Left ventricle myocardium inferior (tissue), 1 donor: ENCODE measurements at regions of chr6 and their contacts with region 1.

Region 1: DNA sequence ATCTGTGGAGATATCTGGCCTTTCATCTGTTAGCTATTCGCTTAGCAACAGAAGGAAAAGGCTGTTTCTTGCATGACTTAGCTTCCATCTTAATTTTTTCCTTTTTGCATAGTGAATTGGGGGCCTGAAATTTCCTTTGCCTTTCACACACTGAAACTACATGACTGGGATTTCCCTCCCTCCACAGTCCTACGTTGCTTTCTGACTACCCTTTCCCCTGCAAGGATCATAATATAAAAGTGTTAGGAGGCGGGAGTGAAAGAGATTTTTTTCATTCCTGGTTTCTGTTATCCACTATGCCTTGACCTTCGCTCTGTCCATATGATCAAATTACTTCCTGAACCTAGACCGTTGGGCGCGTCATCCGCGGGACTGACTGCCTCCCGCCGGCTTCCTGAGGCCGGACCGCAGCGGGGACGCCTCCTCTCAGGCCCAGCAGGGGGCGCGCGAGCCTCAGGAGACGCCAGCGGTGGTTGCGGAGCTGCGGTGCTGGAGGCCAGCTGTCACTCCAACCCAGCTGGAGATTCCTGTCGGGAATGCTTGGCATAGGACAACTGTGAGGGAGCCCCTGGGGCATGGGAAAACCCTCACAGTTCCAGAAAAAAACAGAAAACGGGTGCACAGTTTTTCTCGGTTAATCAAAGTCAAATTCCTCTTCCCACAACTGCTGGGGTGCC is 55.6 kb downstream of the MEP1A start:
- DNase-seq: peak; percentile 88
- H3K4me3 ChIP-seq: peak overlapping the region; percentile 27
- H3K27ac ChIP-seq: peak overlapping the region; percentile 70
- H3K4me1 ChIP-seq: peaks cover 48% of the 10 kb centered on the region
- H3K27me3 ChIP-seq: no peaks in the 10 kb centered on the region
- CTCF ChIP-seq: peak; percentile 98

Region 2: DNA sequence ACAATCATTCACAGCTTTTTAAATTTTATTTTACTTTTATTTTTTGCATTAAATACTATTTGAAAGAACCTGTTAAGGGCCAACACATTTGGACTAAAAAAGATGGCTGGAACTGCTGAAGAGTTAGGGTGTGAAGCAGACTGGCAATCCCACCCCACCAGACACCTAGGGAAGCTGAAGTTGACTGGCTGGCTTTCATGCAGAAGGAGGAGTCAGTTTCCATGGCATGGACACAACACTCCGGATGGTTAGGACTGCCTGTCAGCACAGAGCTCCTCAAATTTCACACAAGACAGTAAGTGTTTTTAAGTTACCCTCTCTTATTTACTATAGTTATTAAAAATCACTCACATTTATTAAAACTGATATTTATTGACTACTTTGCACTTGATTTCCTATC is 102.1 kb before region 1 on chr6 and contains the start of gene ANKRD66:
- intact Hi-C with region 1: no loop called
- DNase-seq: no peak
- H3K4me3 ChIP-seq: no peak within 1 kb of the TSS
- H3K27ac ChIP-seq: no peak within 1 kb of the TSS
- H3K4me1 ChIP-seq: no peaks in the 10 kb centered on the region
- H3K27me3 ChIP-seq: peaks cover 3% of the 10 kb centered on the region
- CTCF ChIP-seq: no peak
- total RNA-seq, gene ANKRD66: not detected

Region 3: DNA sequence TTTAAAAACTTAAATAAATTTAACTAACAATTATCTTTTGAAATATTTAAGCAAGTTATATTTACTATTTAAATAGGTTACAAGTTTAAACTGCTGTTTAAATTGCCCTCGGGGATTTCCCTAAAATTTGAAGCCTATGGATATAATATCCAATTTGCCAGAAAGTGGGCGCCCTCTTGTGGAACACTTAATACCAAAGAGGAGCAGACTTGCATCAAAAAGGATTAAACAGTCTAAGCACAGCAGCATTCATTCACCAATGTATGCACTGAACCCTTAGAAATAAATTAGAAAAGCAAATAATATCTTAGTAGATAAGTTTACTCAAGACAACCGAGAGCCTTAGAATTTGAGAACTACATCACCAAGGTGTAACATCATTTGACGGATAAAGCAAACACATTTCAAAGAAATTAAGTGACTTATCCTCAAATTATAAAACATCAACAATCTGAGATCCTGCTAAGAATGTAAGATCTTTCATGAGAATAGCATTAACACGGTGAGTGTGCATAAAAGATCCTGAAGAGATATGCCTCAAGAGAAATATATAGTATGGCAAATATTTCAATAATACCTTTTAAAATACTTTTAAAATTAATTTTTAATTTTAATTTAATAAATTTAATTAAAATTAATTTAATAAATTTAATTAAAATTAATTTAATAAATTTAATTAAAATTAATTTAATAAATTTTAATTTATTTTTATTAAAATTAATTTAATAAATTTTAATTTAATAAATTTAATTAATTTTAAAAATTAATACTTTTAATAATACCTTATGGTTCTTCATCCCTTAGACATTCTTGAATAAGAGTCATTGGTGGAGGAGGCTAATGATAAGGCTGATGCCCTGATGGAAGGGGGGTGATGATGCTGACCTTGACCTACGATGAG is 67.1 kb before region 1 on chr6:
- intact Hi-C with region 1: no loop called
- DNase-seq: no peak
- H3K4me3 ChIP-seq: no peak overlapping the region
- H3K27ac ChIP-seq: no peak overlapping the region
- H3K4me1 ChIP-seq: no peaks in the 10 kb centered on the region
- H3K27me3 ChIP-seq: no peaks in the 10 kb centered on the region
- CTCF ChIP-seq: peak; percentile 76

Region 4: DNA sequence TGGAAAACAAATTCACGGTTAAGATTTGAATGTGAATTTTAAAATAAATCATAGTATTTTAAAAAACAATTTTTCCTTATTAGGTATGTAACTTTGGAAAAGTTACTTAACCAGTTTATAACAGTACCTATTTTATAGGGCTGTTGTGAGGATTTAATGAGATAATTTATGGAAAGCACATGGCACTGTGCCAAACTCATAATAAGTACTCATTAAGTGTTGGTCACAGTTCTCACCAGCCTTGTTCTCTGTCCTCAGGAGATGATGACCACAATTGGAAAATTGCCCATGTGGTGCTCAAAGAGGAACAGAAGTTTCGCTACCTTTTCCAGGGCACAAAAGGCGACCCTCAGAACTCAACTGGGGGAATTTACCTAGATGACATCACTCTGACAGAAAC is 16.0 kb before region 1 on chr6:
- intact Hi-C with region 1: no loop called
- DNase-seq: no peak
- H3K4me3 ChIP-seq: no peak overlapping the region
- H3K27ac ChIP-seq: no peak overlapping the region
- H3K4me1 ChIP-seq: no peaks in the 10 kb centered on the region
- H3K27me3 ChIP-seq: peaks cover 10% of the 10 kb centered on the region
- CTCF ChIP-seq: no peak

Region 5: GRCh38 chr6:46993846-46994245 is 145.0 kb after region 1 on chr6:
- intact Hi-C with region 1: loop called (anchors 5 kb)
- DNase-seq: no peak
- H3K4me3 ChIP-seq: no peak overlapping the region
- H3K27ac ChIP-seq: no peak overlapping the region
- H3K4me1 ChIP-seq: peaks cover 28% of the 10 kb centered on the region
- H3K27me3 ChIP-seq: no peaks in the 10 kb centered on the region
- CTCF ChIP-seq: no peak